ENCODE measurements at regions of chr7 and their contacts with region 1.

Region 1: GRCh38 chr7:48088559-48089045 is 463 bp upstream of the UPP1 start:
- DNase-seq: no peak
- H3K4me3 Mint-ChIP-seq: peak overlapping the region; percentile 91
- H3K27ac Mint-ChIP-seq: peak overlapping the region; percentile 96
- H3K4me1 Mint-ChIP-seq: peaks cover 71% of the 10 kb centered on the region
- H3K27me3 Mint-ChIP-seq: no peaks in the 10 kb centered on the region

Region 2: GRCh38 chr7:47482013-47482875 is 606.4 kb before region 1 on chr7:
- intact Hi-C with region 1: loop called (anchors 5 kb)
- DNase-seq: no peak
- H3K4me3 Mint-ChIP-seq: peak overlapping the region; percentile 58
- H3K27ac Mint-ChIP-seq: peak overlapping the region; percentile 86
- H3K4me1 Mint-ChIP-seq: peaks cover 33% of the 10 kb centered on the region
- H3K27me3 Mint-ChIP-seq: no peaks in the 10 kb centered on the region

Region 3: GRCh38 chr7:47991741-47992311 is 96.8 kb before region 1 on chr7:
- intact Hi-C with region 1: loop called (anchors 1 kb)
- DNase-seq: peak; percentile 95
- H3K4me3 Mint-ChIP-seq: peak overlapping the region; percentile 88
- H3K27ac Mint-ChIP-seq: peak overlapping the region; percentile 86
- H3K4me1 Mint-ChIP-seq: peaks cover 18% of the 10 kb centered on the region
- H3K27me3 Mint-ChIP-seq: no peaks in the 10 kb centered on the region

Region 4: DNA sequence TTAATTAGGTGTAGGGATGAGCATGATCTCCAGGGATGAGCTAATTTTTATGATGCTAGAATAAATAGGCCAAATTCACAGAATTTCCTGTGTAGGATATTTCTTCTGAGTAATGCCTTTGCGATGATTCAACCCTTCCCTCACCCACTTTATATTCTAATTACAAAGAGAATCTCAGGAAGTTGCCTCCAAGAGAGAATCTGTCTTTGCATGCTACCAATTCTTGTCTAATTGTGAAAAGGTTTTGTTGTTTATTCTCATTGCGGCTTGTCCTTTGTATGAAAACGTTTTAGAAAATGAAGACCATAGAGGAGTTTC is 47.0 kb before region 1 on chr7:
- intact Hi-C with region 1: loop called (anchors 1 kb)
- DNase-seq: no peak
- H3K4me3 Mint-ChIP-seq: peak overlapping the region; percentile 44
- H3K27ac Mint-ChIP-seq: peak overlapping the region; percentile 79
- H3K4me1 Mint-ChIP-seq: peaks cover 35% of the 10 kb centered on the region
- H3K27me3 Mint-ChIP-seq: peaks cover 22% of the 10 kb centered on the region

Region 5: GRCh38 chr7:48109848-48110663 is 21.5 kb after region 1 on chr7:
- intact Hi-C with region 1: loop called (anchors 1 kb)
- DNase-seq: peak; percentile 96
- H3K4me3 Mint-ChIP-seq: no peak overlapping the region
- H3K27ac Mint-ChIP-seq: peak overlapping the region; percentile 35
- H3K4me1 Mint-ChIP-seq: peaks cover 11% of the 10 kb centered on the region
- H3K27me3 Mint-ChIP-seq: no peaks in the 10 kb centered on the region

Region 6: GRCh38 chr7:48299580-48300169 is 211.1 kb after region 1 on chr7:
- intact Hi-C with region 1: loop called (anchors 2 kb)
- DNase-seq: peak; percentile 83
- H3K4me3 Mint-ChIP-seq: no peak overlapping the region
- H3K27ac Mint-ChIP-seq: no peak overlapping the region
- H3K4me1 Mint-ChIP-seq: peaks cover 4% of the 10 kb centered on the region
- H3K27me3 Mint-ChIP-seq: peaks cover 2% of the 10 kb centered on the region

Measured in activated CD4-positive, alpha-beta T cell treated with anti-CD3 and anti-CD28 coated beads, Interleukin-2, amount 10 ng/mL, durations not matched to agents 24 days and 14 days (primary cell).